ENCODE measurements at regions of chr12 and their contacts with region 1.

Region 1: GRCh38 chr12:81627336-81628189 is 131.6 kb downstream of the PPFIA2 start:
- DNase-seq: peak; percentile 29
- ATAC-seq: no peak
- H3K4me3 ChIP-seq: no peak overlapping the region
- H3K27ac ChIP-seq: no peak overlapping the region
- H3K4me1 ChIP-seq: no peaks in the 10 kb centered on the region
- H3K27me3 ChIP-seq: no peaks in the 10 kb centered on the region
- CTCF ChIP-seq: peak; percentile 63
- EP300 ChIP-seq: no peak
- POLR2A ChIP-seq: no peak
- RAD21 ChIP-seq: no peak

Region 2: GRCh38 chr12:80892597-80893445 is 734.7 kb before region 1 on chr12:
- CTCF ChIA-PET with region 1: no interaction called
- POLR2A ChIA-PET with region 1: no interaction called
- in situ Hi-C with region 1: no loop called
- intact Hi-C with region 1: no loop called
- DNase-seq: no peak
- ATAC-seq: no peak
- H3K4me3 ChIP-seq: no peak overlapping the region
- H3K27ac ChIP-seq: no peak overlapping the region
- H3K4me1 ChIP-seq: no peaks in the 10 kb centered on the region
- H3K27me3 ChIP-seq: no peaks in the 10 kb centered on the region
- CTCF ChIP-seq: no peak
- EP300 ChIP-seq: no peak
- POLR2A ChIP-seq: no peak
- RAD21 ChIP-seq: no peak

Region 3: DNA sequence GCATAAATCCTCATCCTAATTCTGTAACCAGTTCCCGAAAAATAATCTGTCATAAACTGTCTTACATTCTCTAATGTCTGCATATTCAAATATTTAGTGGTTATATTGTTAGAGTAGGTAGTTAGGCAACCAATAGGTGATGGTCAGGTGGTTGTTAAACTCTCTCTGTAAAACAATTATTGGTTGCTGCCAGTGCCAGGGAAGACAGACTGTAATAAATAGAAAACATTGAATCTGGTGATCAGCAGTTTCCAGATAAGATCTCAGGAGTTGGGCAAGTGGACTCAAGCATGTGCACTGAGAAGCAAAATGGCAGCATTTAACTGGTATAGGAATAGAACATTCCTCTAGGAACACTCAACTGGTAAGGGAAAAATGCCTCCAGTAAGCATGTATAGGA is 224.2 kb before region 1 on chr12:
- CTCF ChIA-PET with region 1: no interaction called
- POLR2A ChIA-PET with region 1: no interaction called
- in situ Hi-C with region 1: no loop called
- intact Hi-C with region 1: no loop called
- DNase-seq: no peak
- ATAC-seq: no peak
- H3K4me3 ChIP-seq: no peak overlapping the region
- H3K27ac ChIP-seq: no peak overlapping the region
- H3K4me1 ChIP-seq: no peaks in the 10 kb centered on the region
- H3K27me3 ChIP-seq: no peaks in the 10 kb centered on the region
- CTCF ChIP-seq: no peak
- EP300 ChIP-seq: no peak
- POLR2A ChIP-seq: no peak
- RAD21 ChIP-seq: no peak

Region 4: GRCh38 chr12:81450920-81451739 is 176.4 kb before region 1 on chr12:
- CTCF ChIA-PET with region 1: interaction called, 11 read pairs
- POLR2A ChIA-PET with region 1: no interaction called
- in situ Hi-C with region 1: loop called (anchors 5 kb)
- intact Hi-C with region 1: loop called (anchors 1 kb)
- DNase-seq: peak; percentile 58
- ATAC-seq: peak; percentile 96
- H3K4me3 ChIP-seq: no peak overlapping the region
- H3K27ac ChIP-seq: no peak overlapping the region
- H3K4me1 ChIP-seq: no peaks in the 10 kb centered on the region
- H3K27me3 ChIP-seq: no peaks in the 10 kb centered on the region
- CTCF ChIP-seq: peak; percentile 77
- EP300 ChIP-seq: no peak
- POLR2A ChIP-seq: no peak
- RAD21 ChIP-seq: no peak

Region 5: GRCh38 chr12:81610955-81611889 is 16.3 kb before region 1 on chr12:
- CTCF ChIA-PET with region 1: interaction called, 8 read pairs
- POLR2A ChIA-PET with region 1: no interaction called
- in situ Hi-C with region 1: no loop called
- intact Hi-C with region 1: loop called (anchors 2 kb)
- DNase-seq: peak; percentile 28
- ATAC-seq: peak; percentile 98
- H3K4me3 ChIP-seq: peak overlapping the region; percentile 38 to 58 (median 44); a peak in 5 of 6 replicates
- H3K27ac ChIP-seq: no peak overlapping the region
- H3K4me1 ChIP-seq: 0 out of 2 replicates have a peak, but pooled peaks cover 5% of the 10 kb centered on the region
- H3K27me3 ChIP-seq: no peaks in the 10 kb centered on the region
- CTCF ChIP-seq: peak; percentile 56
- EP300 ChIP-seq: no peak
- POLR2A ChIP-seq: no peak
- RAD21 ChIP-seq: no peak